CD4-positive, alpha-beta memory T cell (primary cell): ENCODE measurements at regions of chr1 and their contacts with region 1.

Region 1: GRCh38 chr1:27725374-27726173 is at the start of gene FAM76A:
- DNase-seq: peak; percentile 99 to 100 (median 99)
- H3K4me3 ChIP-seq: peak within 1 kb of the TSS; percentile 38 to 91
- H3K4me3 Mint-ChIP-seq: peak within 1 kb of the TSS; percentile 83 to 91 (median 88)
- H3K27ac ChIP-seq: peak within 1 kb of the TSS; percentile 90
- H3K27ac Mint-ChIP-seq: peak within 1 kb of the TSS; percentile 96 to 100 (median 99)
- H3K4me1 ChIP-seq: peaks cover 16% of the 10 kb centered on the region
- H3K4me1 Mint-ChIP-seq: peaks cover 11 to 38% (median 24%) of the 10 kb centered on the region in 4 donors
- H3K27me3 ChIP-seq: no peaks in the 10 kb centered on the region
- H3K27me3 Mint-ChIP-seq: no peaks in the 10 kb centered on the region
- total RNA-seq, gene FAM76A: 22.8 to 26.0 TPM

Region 2: DNA sequence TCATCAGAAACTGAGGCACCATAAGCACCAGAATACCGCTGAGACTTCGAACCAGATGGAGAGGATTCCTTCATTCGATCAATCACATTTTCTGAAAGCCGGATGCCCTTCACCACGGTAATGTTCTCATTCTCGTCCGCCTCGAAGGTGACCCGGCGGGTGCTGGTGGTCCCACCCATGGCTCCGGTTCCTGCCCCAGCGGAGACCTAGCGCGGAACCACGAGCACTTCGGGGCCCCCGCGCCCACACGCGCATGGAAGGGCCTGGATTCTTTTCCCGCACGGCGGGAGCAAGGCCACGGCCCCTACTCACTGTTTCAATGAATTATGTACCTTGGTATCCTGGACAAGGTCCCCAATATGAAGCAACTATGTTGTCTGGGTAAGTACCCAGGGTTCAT is 524.3 kb before region 1 on chr1:
- CTCF ChIA-PET with region 1: no interaction called
- POLR2A ChIA-PET with region 1: no interaction called
- intact Hi-C with region 1: no loop called
- DNase-seq: no peak
- H3K4me3 ChIP-seq: no peak overlapping the region
- H3K4me3 Mint-ChIP-seq: no peak overlapping the region
- H3K27ac ChIP-seq: no peak overlapping the region
- H3K27ac Mint-ChIP-seq: no peak overlapping the region
- H3K4me1 ChIP-seq: peaks cover 6% of the 10 kb centered on the region
- H3K4me1 Mint-ChIP-seq: peaks cover 4 to 6% (median 5%) of the 10 kb centered on the region in 4 donors
- H3K27me3 ChIP-seq: no peaks in the 10 kb centered on the region
- H3K27me3 Mint-ChIP-seq: peaks cover 1 to 5% of the 10 kb centered on the region in 2 donors

Region 3: DNA sequence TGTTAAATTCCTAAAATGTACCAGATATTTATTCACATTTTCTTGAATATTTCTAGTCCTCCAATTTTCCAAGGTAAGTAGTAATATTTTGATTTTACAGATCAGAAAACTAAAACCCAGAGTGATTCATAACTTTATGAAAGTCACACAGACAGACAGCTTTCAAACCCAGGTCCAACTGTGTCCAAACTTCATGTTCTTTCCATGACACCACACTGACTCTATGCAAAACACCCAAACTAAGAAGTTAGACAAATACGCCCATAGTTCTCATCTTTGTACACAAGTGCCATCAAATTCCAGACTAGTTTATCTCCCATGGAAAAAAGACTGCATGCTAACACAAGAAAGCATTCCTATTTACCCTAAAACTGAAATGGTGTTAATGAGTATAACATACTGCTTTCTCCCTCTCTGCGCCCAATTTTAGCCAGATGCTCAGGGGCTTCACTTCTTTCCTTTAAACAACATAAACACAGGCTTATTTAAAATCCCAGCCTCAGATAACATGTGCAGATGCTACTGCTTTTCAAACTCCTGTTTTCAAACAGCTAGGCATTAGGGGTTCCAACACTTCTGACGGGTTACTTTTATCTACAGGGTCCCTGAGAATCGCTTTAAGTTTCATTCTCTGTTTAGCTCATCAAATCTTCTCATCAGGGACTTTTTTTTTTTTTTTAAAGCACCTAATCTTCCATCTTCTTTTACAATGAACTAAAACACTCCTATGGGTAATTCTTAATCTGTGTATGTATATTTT is 280.2 kb before region 1 on chr1:
- CTCF ChIA-PET with region 1: no interaction called
- POLR2A ChIA-PET with region 1: no interaction called
- intact Hi-C with region 1: no loop called
- DNase-seq: no peak
- H3K4me3 ChIP-seq: no peak overlapping the region
- H3K4me3 Mint-ChIP-seq: peak overlapping the region in 7 of 8 donors; percentile 21 to 84 (median 54)
- H3K27ac ChIP-seq: no peak overlapping the region
- H3K27ac Mint-ChIP-seq: peak overlapping the region; percentile 49 to 89 (median 72)
- H3K4me1 ChIP-seq: peaks cover 28% of the 10 kb centered on the region
- H3K4me1 Mint-ChIP-seq: peaks cover 32 to 47% (median 43%) of the 10 kb centered on the region in 4 donors
- H3K27me3 ChIP-seq: no peaks in the 10 kb centered on the region
- H3K27me3 Mint-ChIP-seq: no peaks in the 10 kb centered on the region

Region 4: GRCh38 chr1:27609210-27609555 is 116.4 kb before region 1 on chr1:
- CTCF ChIA-PET with region 1: interaction called, 4 read pairs
- POLR2A ChIA-PET with region 1: interaction called, 3 read pairs
- intact Hi-C with region 1: loop called (anchors 2 kb)
- DNase-seq: peak in 1 of 5 donors; percentile 63
- H3K4me3 ChIP-seq: no peak overlapping the region
- H3K4me3 Mint-ChIP-seq: no peak overlapping the region
- H3K27ac ChIP-seq: peak overlapping the region; percentile 1
- H3K27ac Mint-ChIP-seq: no peak overlapping the region
- H3K4me1 ChIP-seq: peaks cover 47% of the 10 kb centered on the region
- H3K4me1 Mint-ChIP-seq: peaks cover 18 to 44% (median 31%) of the 10 kb centered on the region in 4 donors
- H3K27me3 ChIP-seq: no peaks in the 10 kb centered on the region
- H3K27me3 Mint-ChIP-seq: no peaks in the 10 kb centered on the region

Region 5: GRCh38 chr1:27772933-27773825 is 47.6 kb after region 1 on chr1 and contains the start of gene STX12:
- CTCF ChIA-PET with region 1: interaction called, 20 read pairs
- POLR2A ChIA-PET with region 1: interaction called, 50 read pairs
- intact Hi-C with region 1: loop called (anchors 1 kb)
- DNase-seq: peak; percentile 98 to 100 (median 98)
- H3K4me3 ChIP-seq: peak within 1 kb of the TSS; percentile 80 to 96
- H3K4me3 Mint-ChIP-seq: peak within 1 kb of the TSS; percentile 91 to 98 (median 97)
- H3K27ac ChIP-seq: peak within 1 kb of the TSS; percentile 87
- H3K27ac Mint-ChIP-seq: peak within 1 kb of the TSS; percentile 86 to 99 (median 99)
- H3K4me1 ChIP-seq: peaks cover 32% of the 10 kb centered on the region
- H3K4me1 Mint-ChIP-seq: peaks cover 27 to 39% (median 29%) of the 10 kb centered on the region in 4 donors
- H3K27me3 ChIP-seq: no peaks in the 10 kb centered on the region
- H3K27me3 Mint-ChIP-seq: no peaks in the 10 kb centered on the region
- total RNA-seq, gene STX12: 25.2 to 27.5 TPM

Region 6: DNA sequence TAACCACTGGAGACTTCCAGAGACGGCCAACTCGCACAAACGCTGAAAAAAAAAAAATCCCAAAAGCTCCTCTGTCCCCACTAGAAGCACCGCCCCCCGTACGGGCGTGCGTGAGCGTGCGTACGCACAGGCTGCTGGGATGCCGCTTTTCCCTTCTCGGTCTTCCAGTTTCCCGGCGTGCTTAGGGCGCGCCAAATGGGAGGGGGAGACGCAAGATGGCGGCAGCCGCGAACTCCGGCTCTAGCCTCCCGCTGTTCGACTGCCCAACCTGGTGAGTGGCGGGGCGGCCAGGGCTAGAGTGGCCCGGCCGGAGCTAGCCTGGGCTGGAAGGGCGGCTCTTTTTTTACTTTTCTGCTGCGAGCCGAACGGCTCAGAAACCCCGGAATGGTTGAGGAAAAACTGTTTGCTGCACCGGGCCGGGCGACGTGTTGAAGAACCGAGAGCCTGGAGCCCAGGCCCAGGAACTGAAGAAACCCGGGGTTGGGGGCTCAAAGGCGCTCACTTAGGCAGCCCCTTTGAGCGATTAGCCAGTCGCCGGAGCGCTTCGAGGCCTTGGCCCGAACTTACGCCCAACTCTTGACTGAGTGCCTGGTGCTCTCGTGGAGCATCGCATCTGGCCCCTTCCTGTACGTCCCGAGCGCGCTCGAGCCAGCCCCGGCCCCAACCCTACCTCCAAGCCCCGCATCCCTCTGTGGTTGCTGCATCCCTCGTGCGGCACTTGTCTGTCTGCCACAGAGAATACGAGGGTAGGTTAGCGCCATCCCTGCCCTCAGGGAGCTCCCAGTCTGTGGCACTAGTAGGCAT is 105.2 kb after region 1 on chr1 and contains the start of gene PPP1R8:
- CTCF ChIA-PET with region 1: interaction called, 3 read pairs
- POLR2A ChIA-PET with region 1: interaction called, 15 read pairs
- intact Hi-C with region 1: loop called (anchors 1 kb)
- DNase-seq: peak; percentile 83 to 90 (median 86)
- H3K4me3 ChIP-seq: peak within 1 kb of the TSS; percentile 76 to 84
- H3K4me3 Mint-ChIP-seq: peak within 1 kb of the TSS; percentile 93 to 97 (median 94)
- H3K27ac ChIP-seq: peak within 1 kb of the TSS; percentile 73
- H3K27ac Mint-ChIP-seq: peak within 1 kb of the TSS; percentile 91 to 97 (median 93)
- H3K4me1 ChIP-seq: peaks cover 44% of the 10 kb centered on the region
- H3K4me1 Mint-ChIP-seq: peaks cover 21 to 46% (median 31%) of the 10 kb centered on the region in 4 donors
- H3K27me3 ChIP-seq: no peaks in the 10 kb centered on the region
- H3K27me3 Mint-ChIP-seq: no peaks in the 10 kb centered on the region
- total RNA-seq, gene PPP1R8: 40.8 to 45.8 TPM

Region 7: DNA sequence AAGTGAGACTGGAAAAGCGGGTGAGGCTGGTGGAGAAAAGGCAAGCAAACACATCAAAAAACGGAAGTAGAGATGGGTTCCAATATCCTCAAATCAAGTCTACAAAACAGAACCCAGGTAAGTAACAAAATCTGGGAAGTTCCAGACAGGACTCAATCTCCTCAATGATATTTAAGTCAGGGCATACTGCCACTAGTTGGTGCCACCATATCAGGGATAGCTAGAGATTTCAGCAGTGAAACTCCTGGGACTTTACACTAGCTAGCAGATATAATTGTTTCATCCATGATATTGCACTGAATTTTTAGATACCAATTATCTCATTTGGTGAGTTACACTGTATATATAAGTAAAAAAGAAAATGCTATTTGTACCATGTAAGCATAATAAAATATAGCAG is 310.9 kb after region 1 on chr1:
- CTCF ChIA-PET with region 1: no interaction called
- POLR2A ChIA-PET with region 1: no interaction called
- intact Hi-C with region 1: no loop called
- DNase-seq: no peak
- H3K4me3 ChIP-seq: no peak overlapping the region
- H3K4me3 Mint-ChIP-seq: peak overlapping the region in 1 of 8 donors; percentile 26
- H3K27ac ChIP-seq: no peak overlapping the region
- H3K27ac Mint-ChIP-seq: peak overlapping the region in 2 of 7 donors; percentile 3 to 78
- H3K4me1 ChIP-seq: no peaks in the 10 kb centered on the region
- H3K4me1 Mint-ChIP-seq: peaks cover 0 to 1% (median 0%) of the 10 kb centered on the region in 4 donors
- H3K27me3 ChIP-seq: no peaks in the 10 kb centered on the region
- H3K27me3 Mint-ChIP-seq: no peaks in the 10 kb centered on the region